HCT116 (cell line): ENCODE measurements at regions of chr2 and their contacts with region 1.

Region 1: DNA sequence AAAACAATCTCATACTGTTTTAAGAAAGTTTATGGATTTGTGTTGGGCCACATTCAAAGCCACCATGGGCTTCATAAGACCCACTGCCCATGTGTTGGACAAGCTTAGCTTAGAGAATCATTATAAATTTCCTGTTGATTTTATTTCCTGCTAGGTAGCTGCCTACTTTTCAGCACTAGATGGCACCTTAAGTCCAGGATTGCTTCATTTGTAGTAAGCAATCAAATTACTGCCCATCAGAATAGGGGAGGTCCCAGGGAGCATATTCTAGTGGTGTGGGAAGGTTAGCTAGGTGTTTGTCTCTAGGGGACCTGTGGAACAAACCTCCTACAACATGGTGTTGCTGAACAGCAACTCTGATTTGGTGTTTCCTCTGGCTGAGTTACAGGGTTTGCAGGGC is 11.0 kb upstream of the DCDC2C start:
- DNase-seq: peak; percentile 51
- ATAC-seq: peak; percentile 96
- H3K4me3 ChIP-seq: no peak overlapping the region
- H3K27ac ChIP-seq: no peak overlapping the region
- H3K4me1 ChIP-seq: no peaks in the 10 kb centered on the region
- H3K27me3 ChIP-seq: peaks cover 4% of the 10 kb centered on the region
- CTCF ChIP-seq: peak; percentile 73 to 78 (median 75)
- POLR2A ChIP-seq: no peak
- RAD21 ChIP-seq: peak; percentile 85

Region 2: DNA sequence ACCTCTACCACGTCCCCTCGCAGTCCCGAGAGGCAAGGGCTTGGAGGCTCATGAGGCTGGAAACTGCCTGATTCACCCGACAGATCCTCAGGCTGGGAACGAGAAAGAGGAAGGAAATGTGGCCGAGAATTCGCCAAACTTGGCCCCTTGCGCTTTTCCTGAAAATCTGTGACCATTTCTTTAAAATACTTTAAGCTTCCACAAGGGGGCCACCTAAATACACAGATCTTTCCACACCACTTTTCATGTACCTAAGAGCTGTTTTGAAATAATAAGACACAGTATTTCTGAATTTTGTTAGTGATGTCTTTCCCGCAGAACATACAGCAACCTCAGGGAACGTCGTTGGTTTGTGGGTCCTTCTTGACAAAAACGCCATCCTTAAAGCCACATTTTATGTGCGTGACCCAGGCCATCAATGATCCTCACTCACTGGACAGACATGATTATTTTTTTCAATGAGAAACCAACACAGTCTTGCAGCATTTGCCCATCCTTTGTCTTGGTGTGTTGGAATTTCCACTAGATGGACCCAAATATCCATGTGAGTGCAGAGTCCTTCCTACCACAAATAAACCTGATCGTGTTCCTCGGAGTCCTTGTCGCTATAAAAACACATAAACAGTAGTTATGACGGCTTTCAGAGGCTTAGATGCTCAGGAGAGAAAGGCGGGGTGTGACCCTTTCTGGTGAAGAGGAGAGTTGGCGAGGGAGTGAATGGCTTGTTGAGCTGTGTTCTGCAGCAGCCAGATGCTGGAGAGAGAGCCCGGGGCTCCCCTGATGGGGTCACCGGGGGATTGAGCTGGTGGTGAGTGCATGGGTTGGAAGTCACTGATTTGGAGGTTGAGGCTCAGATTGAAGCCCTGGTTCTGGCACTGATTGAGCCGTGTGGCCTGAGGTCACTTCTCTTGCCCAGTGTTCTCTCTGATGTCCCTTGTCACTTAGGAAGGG is 36.0 kb after region 1 on chr2:
- CTCF ChIA-PET with region 1: interaction called, 18 read pairs
- POLR2A ChIA-PET with region 1: interaction called, 5 read pairs
- RAD21 ChIA-PET with region 1: no interaction called
- intact Hi-C with region 1: no loop called
- DNase-seq: peak; percentile 33
- ATAC-seq: peak; percentile 73
- H3K4me3 ChIP-seq: no peak overlapping the region
- H3K27ac ChIP-seq: no peak overlapping the region
- H3K4me1 ChIP-seq: no peaks in the 10 kb centered on the region; a peak in 1 of 4 replicates
- H3K27me3 ChIP-seq: peaks cover 13% of the 10 kb centered on the region
- CTCF ChIP-seq: peak; percentile 48 to 67 (median 64); a peak in 4 of 6 replicates
- POLR2A ChIP-seq: no peak
- RAD21 ChIP-seq: peak; percentile 75

Region 3: DNA sequence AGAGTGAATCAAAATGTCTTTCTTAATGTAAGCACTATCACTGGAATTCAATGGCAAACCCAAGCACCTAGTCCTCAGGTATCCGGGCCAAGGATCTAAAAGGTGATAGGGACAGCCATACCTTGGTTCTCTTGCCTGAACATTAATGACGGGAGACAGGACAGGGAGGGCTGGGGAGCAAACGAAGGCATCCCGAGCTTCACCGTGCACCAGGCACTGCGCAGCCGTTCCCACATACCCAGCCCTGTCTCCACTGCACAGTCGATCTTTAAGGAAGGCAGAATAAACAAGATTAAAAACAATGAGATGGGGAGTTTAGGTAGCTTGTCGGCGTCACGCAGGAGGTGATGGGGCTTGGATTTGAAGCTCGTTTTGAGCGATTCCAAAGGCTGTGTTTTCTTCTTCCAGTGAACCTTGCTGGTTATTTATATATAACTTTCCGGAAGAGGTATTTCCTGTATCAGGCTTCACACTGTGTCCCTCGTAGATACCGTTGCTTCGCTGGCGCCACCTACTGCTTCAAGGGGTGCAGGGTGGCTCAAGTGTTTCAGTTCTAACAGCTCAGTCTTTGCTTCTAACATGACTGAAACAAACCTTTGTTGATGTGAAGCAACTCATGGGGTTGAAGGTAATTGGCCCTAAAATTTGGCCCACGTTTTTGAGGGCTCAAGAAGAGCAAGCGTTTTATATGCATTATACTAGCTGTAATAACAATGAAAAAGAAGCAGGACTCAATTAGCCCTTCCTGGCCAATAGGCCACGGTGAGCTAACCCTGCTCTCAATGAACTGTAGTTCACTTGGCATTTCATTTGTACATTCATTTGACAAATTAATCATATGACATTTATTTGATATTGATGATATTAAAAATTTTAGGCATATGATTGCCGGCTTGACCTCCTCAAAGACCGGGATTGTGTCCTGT is 88.4 kb after region 1 on chr2:
- CTCF ChIA-PET with region 1: interaction called, 12 read pairs
- POLR2A ChIA-PET with region 1: no interaction called
- RAD21 ChIA-PET with region 1: interaction called in 1 of 2 experiments, 4 read pairs
- intact Hi-C with region 1: loop called (anchors 2 kb)
- DNase-seq: peak; percentile 46
- ATAC-seq: peak; percentile 97
- H3K4me3 ChIP-seq: no peak overlapping the region
- H3K27ac ChIP-seq: no peak overlapping the region
- H3K4me1 ChIP-seq: peaks cover 0 to 7% of the 10 kb centered on the region in 2 experiments; a peak in 1 of 4 replicates
- H3K27me3 ChIP-seq: peaks cover 13% of the 10 kb centered on the region; the same call in 1 of the 2 replicates
- CTCF ChIP-seq: peak; percentile 69 to 91 (median 88); a peak in 5 of 6 replicates
- POLR2A ChIP-seq: no peak
- RAD21 ChIP-seq: peak; percentile 64

Region 4: DNA sequence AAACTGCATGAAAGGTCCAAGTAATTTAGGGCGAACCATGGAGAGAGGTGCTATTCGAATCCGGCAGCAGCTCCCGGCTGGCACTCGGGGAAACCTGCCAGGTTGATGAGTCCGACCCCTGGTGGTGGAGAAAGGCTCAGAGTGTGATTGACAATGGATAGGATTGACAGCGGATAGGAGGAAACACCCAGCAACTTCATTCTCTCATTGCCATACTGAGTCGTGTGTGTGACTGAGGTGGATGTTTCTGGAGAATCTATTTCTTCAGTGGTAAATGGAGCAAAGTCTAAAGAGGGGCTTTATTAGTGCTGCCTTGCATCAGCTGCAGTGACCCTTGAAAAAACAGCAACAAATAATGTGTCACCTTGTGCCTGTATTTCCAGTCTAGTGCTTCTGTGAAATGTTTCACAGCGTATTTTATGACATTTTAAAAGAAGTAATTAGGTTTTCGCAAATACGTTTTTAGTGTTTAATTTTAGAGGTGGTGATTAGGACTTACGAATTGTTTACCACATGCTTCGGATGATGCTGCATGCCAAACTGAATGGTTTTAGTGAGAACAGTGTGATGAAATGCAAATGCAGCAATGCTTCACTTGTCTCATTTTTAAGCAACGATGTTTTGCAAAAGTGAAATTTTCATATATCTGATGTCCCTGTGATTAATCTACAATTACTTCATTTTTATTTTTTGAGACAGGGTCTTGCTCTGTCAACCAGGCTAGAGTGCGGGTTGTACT is 113.0 kb after region 1 on chr2:
- CTCF ChIA-PET with region 1: interaction called, 31 read pairs
- POLR2A ChIA-PET with region 1: no interaction called
- RAD21 ChIA-PET with region 1: no interaction called
- intact Hi-C with region 1: loop called (anchors 1 kb)
- DNase-seq: peak; percentile 23
- ATAC-seq: peak; percentile 96
- H3K4me3 ChIP-seq: no peak overlapping the region
- H3K27ac ChIP-seq: no peak overlapping the region
- H3K4me1 ChIP-seq: no peaks in the 10 kb centered on the region
- H3K27me3 ChIP-seq: peaks cover 10% of the 10 kb centered on the region; the same call in 1 of the 2 replicates
- CTCF ChIP-seq: peak; percentile 66 to 84 (median 71); a peak in 5 of 6 replicates
- POLR2A ChIP-seq: no peak
- RAD21 ChIP-seq: peak; percentile 55

Region 5: DNA sequence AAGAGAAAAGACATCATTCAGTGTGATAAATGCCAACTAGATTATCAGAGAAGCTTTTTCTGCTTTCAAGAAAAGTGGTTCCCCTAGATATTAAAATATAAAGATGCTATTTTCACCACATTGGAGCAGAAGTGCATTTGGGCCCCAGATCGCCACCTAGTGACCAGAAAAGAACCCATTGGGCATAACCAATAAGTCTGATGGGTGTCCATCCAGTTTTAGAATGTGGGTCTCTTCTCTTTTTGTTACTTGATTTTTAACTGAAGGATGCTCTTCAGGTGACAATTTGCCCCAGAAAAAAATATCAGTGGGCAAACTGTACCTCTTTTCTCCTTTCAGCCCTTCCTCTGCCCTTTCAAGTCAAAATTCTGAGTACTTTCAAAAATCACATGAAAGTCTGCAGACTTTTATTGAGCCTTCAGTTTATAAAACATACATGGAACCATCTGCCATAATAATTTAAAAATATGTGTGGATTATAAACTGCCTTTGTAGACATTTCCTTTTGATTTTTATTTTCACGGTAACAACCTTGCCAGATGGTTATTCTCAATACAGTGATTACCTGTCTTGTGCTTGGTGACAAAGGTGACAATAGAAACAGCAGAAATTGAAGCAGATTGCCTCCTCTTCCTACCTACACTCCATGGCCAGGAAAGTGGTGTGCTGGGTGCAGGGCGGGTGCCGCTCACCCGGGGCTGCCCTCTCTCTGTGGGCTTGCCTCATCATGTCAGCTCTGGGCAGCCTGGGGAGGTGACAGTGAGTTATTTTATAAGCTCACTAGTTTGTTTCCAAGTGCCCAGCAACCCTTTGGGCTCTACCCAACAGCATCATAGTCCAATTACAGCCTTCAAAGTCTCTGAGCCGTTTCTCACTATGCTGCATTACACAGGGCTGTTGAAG is 135.5 kb after region 1 on chr2:
- CTCF ChIA-PET with region 1: interaction called, 3 read pairs
- POLR2A ChIA-PET with region 1: no interaction called
- RAD21 ChIA-PET with region 1: interaction called, 3 to 4 read pairs
- intact Hi-C with region 1: loop called (anchors 2 kb)
- DNase-seq: no peak
- ATAC-seq: peak; percentile 88
- H3K4me3 ChIP-seq: no peak overlapping the region
- H3K27ac ChIP-seq: no peak overlapping the region
- H3K4me1 ChIP-seq: no peaks in the 10 kb centered on the region
- H3K27me3 ChIP-seq: peaks cover 25% of the 10 kb centered on the region
- CTCF ChIP-seq: peak; percentile 47 to 80 (median 78); a peak in 5 of 6 replicates
- POLR2A ChIP-seq: no peak
- RAD21 ChIP-seq: peak; percentile 42

Region 6: DNA sequence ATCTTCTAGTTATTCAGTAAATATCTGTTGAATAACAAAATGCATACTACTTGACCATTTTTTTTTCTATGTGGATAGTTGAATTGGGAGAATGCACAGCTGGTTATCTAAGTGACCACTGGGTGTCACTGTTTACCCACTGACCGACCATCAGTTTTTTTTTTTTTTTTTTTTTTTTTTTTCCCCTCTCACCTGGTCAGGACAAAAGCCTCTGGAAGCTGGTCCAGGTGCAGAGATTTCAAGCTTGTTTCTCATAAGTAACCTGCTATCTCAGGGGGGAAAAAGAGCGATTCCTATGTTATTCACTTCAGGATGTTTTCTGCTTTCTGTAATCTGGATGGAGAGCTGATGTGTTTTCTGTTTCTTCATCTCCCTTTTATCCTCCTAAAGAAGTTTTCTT is 267.0 kb after region 1 on chr2:
- CTCF ChIA-PET with region 1: interaction called, 15 read pairs
- POLR2A ChIA-PET with region 1: no interaction called
- RAD21 ChIA-PET with region 1: no interaction called
- intact Hi-C with region 1: loop called (anchors 2 kb)
- DNase-seq: peak; percentile 27
- ATAC-seq: 0 out of 2 replicates have a peak, but pooled peaks have one; percentile 22
- H3K4me3 ChIP-seq: no peak overlapping the region
- H3K27ac ChIP-seq: no peak overlapping the region
- H3K4me1 ChIP-seq: no peaks in the 10 kb centered on the region
- H3K27me3 ChIP-seq: no peaks in the 10 kb centered on the region
- CTCF ChIP-seq: peak; percentile 29 to 82 (median 63); a peak in 5 of 6 replicates
- POLR2A ChIP-seq: no peak
- RAD21 ChIP-seq: peak; percentile 74